ENCODE measurements at regions of chr5 and their contacts with region 1.

Region 1: GRCh38 chr5:180291943-180292831 is at the start of gene MAPK9:
- DNase-seq: peak; percentile 88
- H3K4me3 ChIP-seq: peak within 1 kb of the TSS; percentile 86 to 97 (median 93)
- H3K27ac ChIP-seq: peak within 1 kb of the TSS; percentile 94 to 99 (median 96)
- H3K4me1 ChIP-seq: peaks cover 11 to 34% (median 21%) of the 10 kb centered on the region in 4 donors
- H3K27me3 ChIP-seq: no peaks in the 10 kb centered on the region
- CTCF ChIP-seq: no peak
- EP300 ChIP-seq: no peak
- POLR2A ChIP-seq: peak; percentile 48
- total RNA-seq, gene MAPK9: 25.5 to 42.3 (median 36.5) TPM

Region 2: GRCh38 chr5:180328296-180329137 is 36.3 kb after region 1 on chr5:
- in situ Hi-C with region 1: no loop called
- intact Hi-C with region 1: loop called (anchors 1 kb)
- DNase-seq: peak; percentile 86
- H3K4me3 ChIP-seq: no peak overlapping the region
- H3K27ac ChIP-seq: no peak overlapping the region
- H3K4me1 ChIP-seq: no peaks in the 10 kb centered on the region
- H3K27me3 ChIP-seq: peaks cover 10% of the 10 kb centered on the region
- CTCF ChIP-seq: peak; percentile 72 to 84 (median 74)
- EP300 ChIP-seq: no peak
- POLR2A ChIP-seq: no peak

Measured in transverse colon (tissue), 4 donors.